Natural killer cell (primary cell): ENCODE measurements at regions of chr9 and their contacts with region 1.

Region 1: GRCh38 chr9:127903557-127904475 is 4.4 kb upstream of the ST6GALNAC6 start:
- DNase-seq: peak; percentile 54 to 69
- ATAC-seq: peak in 2 of 3 donors; percentile 0 to 2
- H3K4me3 ChIP-seq: peak overlapping the region; percentile 54
- H3K4me3 Mint-ChIP-seq: peak overlapping the region; percentile 99
- H3K27ac ChIP-seq: peak overlapping the region; percentile 96
- H3K27ac Mint-ChIP-seq: peak overlapping the region; percentile 100
- H3K4me1 ChIP-seq: peaks cover 82% of the 10 kb centered on the region
- H3K4me1 Mint-ChIP-seq: peaks cover 33 to 51% of the 10 kb centered on the region in 2 donors
- H3K27me3 ChIP-seq: no peaks in the 10 kb centered on the region
- H3K27me3 Mint-ChIP-seq: no peaks in the 10 kb centered on the region
- CTCF ChIP-seq: no peak

Region 2: DNA sequence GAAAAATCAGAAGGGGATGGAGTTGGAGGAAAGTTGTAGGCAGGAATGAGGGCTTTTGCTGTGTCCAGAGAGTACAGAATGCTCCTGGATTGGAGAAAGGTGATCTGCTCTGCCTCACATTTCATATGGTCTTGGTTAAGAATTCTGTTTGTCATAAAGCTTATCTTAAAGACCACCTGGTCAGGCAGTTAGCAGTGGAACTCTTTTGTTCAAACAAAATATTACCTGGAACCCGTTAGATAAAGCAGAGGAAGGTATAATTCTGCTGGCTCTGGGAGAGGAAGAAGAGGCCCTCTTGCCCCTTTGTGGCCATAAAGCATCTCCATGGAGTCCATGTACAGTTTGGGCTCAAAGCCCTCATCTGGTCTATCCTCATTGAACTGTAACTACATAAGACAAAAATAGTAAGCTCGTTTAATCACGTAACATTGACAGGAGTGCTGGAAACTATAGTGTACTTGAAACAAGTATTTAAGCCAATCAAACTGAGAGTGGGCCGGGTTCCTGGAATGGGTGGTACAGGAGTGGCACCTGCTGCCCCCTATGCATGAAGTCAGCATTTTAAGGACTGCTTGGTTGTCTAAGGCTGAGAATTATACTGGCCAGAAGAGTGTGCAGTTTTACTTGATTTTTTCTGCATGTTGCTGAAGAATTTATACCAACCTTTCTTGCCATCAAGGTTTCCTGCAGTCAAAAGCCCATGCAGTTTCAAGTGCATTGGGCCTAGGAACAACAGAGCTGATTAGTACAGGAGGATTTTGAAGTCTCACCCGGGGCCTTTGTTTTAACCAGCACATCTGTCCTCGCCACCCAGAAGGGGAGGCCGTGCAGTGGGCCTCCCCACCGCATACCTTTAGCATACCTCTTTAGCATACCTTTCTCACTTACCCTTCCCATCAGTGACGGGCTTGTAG is 251.9 kb before region 1 on chr9:
- intact Hi-C with region 1: no loop called
- DNase-seq: no peak
- ATAC-seq: no peak
- H3K4me3 ChIP-seq: no peak overlapping the region
- H3K4me3 Mint-ChIP-seq: no peak overlapping the region
- H3K27ac ChIP-seq: no peak overlapping the region
- H3K27ac Mint-ChIP-seq: no peak overlapping the region
- H3K4me1 ChIP-seq: no peaks in the 10 kb centered on the region
- H3K4me1 Mint-ChIP-seq: no peaks in the 10 kb centered on the region
- H3K27me3 ChIP-seq: no peaks in the 10 kb centered on the region
- H3K27me3 Mint-ChIP-seq: no peaks in the 10 kb centered on the region
- CTCF ChIP-seq: no peak

Region 3: GRCh38 chr9:127776195-127776923 is 127.5 kb before region 1 on chr9:
- intact Hi-C with region 1: loop called (anchors 2 kb)
- DNase-seq: peak; percentile 68 to 91
- ATAC-seq: peak; percentile 55 to 70 (median 58)
- H3K4me3 ChIP-seq: peak overlapping the region; percentile 66
- H3K4me3 Mint-ChIP-seq: peak overlapping the region; percentile 98
- H3K27ac ChIP-seq: peak overlapping the region; percentile 83
- H3K27ac Mint-ChIP-seq: peak overlapping the region; percentile 95 to 98
- H3K4me1 ChIP-seq: peaks cover 72% of the 10 kb centered on the region
- H3K4me1 Mint-ChIP-seq: peaks cover 39 to 66% of the 10 kb centered on the region in 2 donors
- H3K27me3 ChIP-seq: no peaks in the 10 kb centered on the region
- H3K27me3 Mint-ChIP-seq: no peaks in the 10 kb centered on the region
- CTCF ChIP-seq: no peak